Activated CD4-positive, alpha-beta T cell treated with anti-CD3 and anti-CD28 coated beads, Interleukin-2, amount 10 ng/mL, durations not matched to agents 24 days and 14 days (primary cell): ENCODE measurements at regions of chr4 and their contacts with region 1.

Region 1: GRCh38 chr4:98510757-98511517 is 147.5 kb downstream of the TSPAN5 start:
- DNase-seq: peak; percentile 81
- H3K4me3 Mint-ChIP-seq: peak overlapping the region; percentile 73
- H3K27ac Mint-ChIP-seq: peak overlapping the region; percentile 78
- H3K4me1 Mint-ChIP-seq: peaks cover 62% of the 10 kb centered on the region
- H3K27me3 Mint-ChIP-seq: no peaks in the 10 kb centered on the region

Region 2: GRCh38 chr4:98406819-98407218 is 104.1 kb before region 1 on chr4:
- intact Hi-C with region 1: loop called (anchors 5 kb)
- DNase-seq: no peak
- H3K4me3 Mint-ChIP-seq: no peak overlapping the region
- H3K27ac Mint-ChIP-seq: no peak overlapping the region
- H3K4me1 Mint-ChIP-seq: peaks cover 12% of the 10 kb centered on the region
- H3K27me3 Mint-ChIP-seq: no peaks in the 10 kb centered on the region

Region 3: DNA sequence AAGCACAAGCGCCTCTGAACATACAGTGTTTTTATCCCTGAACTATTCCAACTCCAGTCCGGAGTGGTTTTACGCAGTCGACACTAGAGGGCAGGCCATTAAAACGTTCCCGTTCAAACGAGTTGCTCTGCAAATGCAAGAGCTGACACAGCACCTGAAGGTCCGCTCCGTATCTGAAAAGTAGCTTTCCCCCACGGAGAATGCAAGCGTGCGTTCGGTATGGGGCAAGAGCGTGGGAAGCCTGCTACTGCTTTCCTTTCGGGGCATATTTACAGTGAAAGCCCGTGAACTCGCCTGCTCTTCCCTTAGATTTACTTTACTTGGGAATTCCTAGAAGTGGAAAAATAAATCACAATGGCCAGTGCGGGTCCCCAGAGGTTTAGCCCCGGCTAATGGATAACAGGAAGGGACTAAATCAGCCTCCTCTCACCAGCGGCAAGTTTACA is 43.3 kb before region 1 on chr4:
- intact Hi-C with region 1: loop called (anchors 10 kb)
- DNase-seq: peak; percentile 92
- H3K4me3 Mint-ChIP-seq: peak overlapping the region; percentile 79
- H3K27ac Mint-ChIP-seq: peak overlapping the region; percentile 38
- H3K4me1 Mint-ChIP-seq: peaks cover 33% of the 10 kb centered on the region
- H3K27me3 Mint-ChIP-seq: no peaks in the 10 kb centered on the region

Region 4: GRCh38 chr4:98482847-98483806 is 27.8 kb before region 1 on chr4:
- intact Hi-C with region 1: loop called (anchors 1 kb)
- DNase-seq: peak; percentile 75
- H3K4me3 Mint-ChIP-seq: peak overlapping the region; percentile 80
- H3K27ac Mint-ChIP-seq: peak overlapping the region; percentile 99
- H3K4me1 Mint-ChIP-seq: peaks cover 79% of the 10 kb centered on the region
- H3K27me3 Mint-ChIP-seq: no peaks in the 10 kb centered on the region

Region 5: GRCh38 chr4:98493296-98493695 is 17.6 kb before region 1 on chr4:
- intact Hi-C with region 1: loop called (anchors 1 kb)
- DNase-seq: no peak
- H3K4me3 Mint-ChIP-seq: peak overlapping the region; percentile 32
- H3K27ac Mint-ChIP-seq: peak overlapping the region; percentile 84
- H3K4me1 Mint-ChIP-seq: peaks cover 31% of the 10 kb centered on the region
- H3K27me3 Mint-ChIP-seq: no peaks in the 10 kb centered on the region

Region 6: GRCh38 chr4:98522636-98523395 is 11.9 kb after region 1 on chr4:
- intact Hi-C with region 1: loop called (anchors 1 kb)
- DNase-seq: no peak
- H3K4me3 Mint-ChIP-seq: peak overlapping the region; percentile 4
- H3K27ac Mint-ChIP-seq: peak overlapping the region; percentile 77
- H3K4me1 Mint-ChIP-seq: peaks cover 42% of the 10 kb centered on the region
- H3K27me3 Mint-ChIP-seq: no peaks in the 10 kb centered on the region